IMR-90 (cell line): ENCODE measurements at regions of chr14 and their contacts with region 1.

Region 1: GRCh38 chr14:24108336-24108874 is 6.2 kb upstream of the DCAF11 start:
- DNase-seq: no peak
- ATAC-seq: no peak; the same call in 1 of the 2 replicates
- H3K4me3 ChIP-seq: no peak overlapping the region
- H3K27ac ChIP-seq: no peak overlapping the region
- H3K4me1 ChIP-seq: no peaks in the 10 kb centered on the region
- H3K27me3 ChIP-seq: no peaks in the 10 kb centered on the region
- CTCF ChIP-seq: no peak
- POLR2A ChIP-seq: no peak
- RAD21 ChIP-seq: no peak

Region 2: GRCh38 chr14:24058260-24058950 is 50.0 kb before region 1 on chr14:
- CTCF ChIA-PET with region 1: interaction called, 41 read pairs
- POLR2A ChIA-PET with region 1: no interaction called
- dilution Hi-C with region 1: no loop called
- in situ Hi-C with region 1: no loop called
- intact Hi-C with region 1: loop called (anchors 1 kb)
- DNase-seq: peak; percentile 64
- ATAC-seq: peak; percentile 98
- H3K4me3 ChIP-seq: no peak overlapping the region
- H3K27ac ChIP-seq: no peak overlapping the region
- H3K4me1 ChIP-seq: no peaks in the 10 kb centered on the region
- H3K27me3 ChIP-seq: peaks cover 34% of the 10 kb centered on the region; the same call in 1 of the 2 replicates
- CTCF ChIP-seq: peak; percentile 93
- POLR2A ChIP-seq: no peak
- RAD21 ChIP-seq: peak; percentile 94

Region 3: GRCh38 chr14:24721775-24722174 is 613.4 kb after region 1 on chr14:
- CTCF ChIA-PET with region 1: no interaction called
- POLR2A ChIA-PET with region 1: no interaction called
- dilution Hi-C with region 1: no loop called
- in situ Hi-C with region 1: no loop called
- intact Hi-C with region 1: no loop called
- DNase-seq: no peak
- ATAC-seq: no peak
- H3K4me3 ChIP-seq: no peak overlapping the region
- H3K27ac ChIP-seq: no peak overlapping the region
- H3K4me1 ChIP-seq: no peaks in the 10 kb centered on the region
- H3K27me3 ChIP-seq: no peaks in the 10 kb centered on the region
- CTCF ChIP-seq: no peak
- POLR2A ChIP-seq: no peak
- RAD21 ChIP-seq: no peak

Region 4: GRCh38 chr14:24817212-24818057 is 709.0 kb after region 1 on chr14:
- CTCF ChIA-PET with region 1: no interaction called
- POLR2A ChIA-PET with region 1: no interaction called
- dilution Hi-C with region 1: no loop called
- in situ Hi-C with region 1: no loop called
- intact Hi-C with region 1: no loop called
- DNase-seq: peak; percentile 52
- ATAC-seq: peak; percentile 92
- H3K4me3 ChIP-seq: no peak overlapping the region
- H3K27ac ChIP-seq: no peak overlapping the region
- H3K4me1 ChIP-seq: no peaks in the 10 kb centered on the region
- H3K27me3 ChIP-seq: no peaks in the 10 kb centered on the region
- CTCF ChIP-seq: peak; percentile 62
- POLR2A ChIP-seq: no peak
- RAD21 ChIP-seq: peak; percentile 81